ENCODE measurements at regions of chr17 and their contacts with region 1.

Region 1: GRCh38 chr17:29568331-29569244 is at the start of gene TP53I13:
- DNase-seq: peak; percentile 82 to 96
- H3K4me3 ChIP-seq: peak within 1 kb of the TSS; percentile 56
- H3K4me1 ChIP-seq: peaks cover 12% of the 10 kb centered on the region
- H3K27me3 ChIP-seq: no peaks in the 10 kb centered on the region

Region 2: DNA sequence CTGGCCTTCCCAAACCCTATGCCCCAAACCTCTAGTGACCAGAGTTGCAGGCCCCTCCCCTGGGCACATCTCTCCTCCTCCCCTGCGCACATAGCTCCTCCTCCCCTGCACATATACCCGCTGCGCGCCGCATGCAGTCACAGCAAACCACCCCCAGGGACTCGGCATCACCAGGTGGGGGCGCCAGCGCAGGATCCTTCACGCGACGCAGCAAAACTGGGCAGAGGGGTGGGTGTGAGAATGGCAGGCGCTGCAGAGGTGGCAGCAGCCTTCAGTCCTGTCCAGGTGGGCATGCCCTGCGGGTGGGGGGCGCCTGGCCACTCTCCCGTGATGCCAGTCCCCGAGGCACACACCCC is 48.5 kb after region 1 on chr17:
- in situ Hi-C with region 1: loop called (anchors 5 kb)
- DNase-seq: peak; percentile 43 to 88
- H3K4me3 ChIP-seq: no peak overlapping the region
- H3K4me1 ChIP-seq: peaks cover 15% of the 10 kb centered on the region
- H3K27me3 ChIP-seq: no peaks in the 10 kb centered on the region